Heart left ventricle (tissue), 16 donors: ENCODE measurements at regions of chr4 and their contacts with region 1.

Region 1: DNA sequence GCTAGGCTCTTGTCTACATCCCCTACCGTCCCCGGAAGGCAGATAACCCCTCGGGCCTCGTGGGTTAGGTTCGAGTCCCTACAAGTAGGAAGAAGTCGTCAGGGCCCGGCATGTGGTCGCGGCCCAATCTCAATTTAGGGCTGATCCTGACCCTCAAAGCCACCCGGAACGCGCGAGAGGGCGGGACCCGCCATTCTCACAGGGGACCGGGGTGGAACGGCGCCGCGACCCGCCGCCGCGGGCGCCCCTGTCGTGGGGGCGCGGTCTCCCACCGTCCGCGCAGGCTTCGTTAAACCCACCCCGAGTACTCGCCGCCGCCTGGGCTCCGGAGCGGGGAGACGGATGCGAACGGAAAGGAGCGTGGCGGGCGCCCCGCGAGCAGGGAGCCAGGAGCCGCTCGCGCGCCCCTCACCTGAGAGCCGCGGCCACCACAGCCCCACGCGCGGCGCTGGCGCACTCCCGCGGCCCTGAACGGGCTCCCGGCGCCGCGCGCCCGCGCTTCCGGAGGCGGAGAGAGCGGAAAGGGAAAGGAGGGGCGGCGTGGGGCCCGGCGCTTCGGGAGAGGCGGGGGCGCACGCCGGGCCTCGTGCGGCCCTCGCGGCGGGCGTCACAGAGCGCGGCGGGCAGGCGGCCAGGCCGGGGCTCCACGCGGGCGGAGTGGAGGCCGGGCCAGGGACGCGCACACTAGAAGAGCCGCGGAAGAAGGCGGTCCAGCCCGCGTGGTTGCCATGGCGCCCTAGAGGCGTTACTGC is at the start of gene CFAP97:
- DNase-seq: peak; percentile 93 to 96 (median 94)
- ATAC-seq: peak; percentile 91 to 96 (median 94)
- H3K4me3 ChIP-seq: peak within 1 kb of the TSS; percentile 59 to 93 (median 84)
- H3K27ac ChIP-seq: peak within 1 kb of the TSS; percentile 88 to 99 (median 97)
- H3K4me1 ChIP-seq: peaks cover 6 to 36% (median 23%) of the 10 kb centered on the region in 12 donors
- H3K27me3 ChIP-seq: no peaks in the 10 kb centered on the region
- CTCF ChIP-seq: peak in 3 of 12 donors; percentile 7 to 26 (median 21)
- POLR2A ChIP-seq: peak in 1 of 2 donors; percentile 70
- total RNA-seq, gene CFAP97: 9.7 to 22.7 (median 14.5) TPM

Region 2: DNA sequence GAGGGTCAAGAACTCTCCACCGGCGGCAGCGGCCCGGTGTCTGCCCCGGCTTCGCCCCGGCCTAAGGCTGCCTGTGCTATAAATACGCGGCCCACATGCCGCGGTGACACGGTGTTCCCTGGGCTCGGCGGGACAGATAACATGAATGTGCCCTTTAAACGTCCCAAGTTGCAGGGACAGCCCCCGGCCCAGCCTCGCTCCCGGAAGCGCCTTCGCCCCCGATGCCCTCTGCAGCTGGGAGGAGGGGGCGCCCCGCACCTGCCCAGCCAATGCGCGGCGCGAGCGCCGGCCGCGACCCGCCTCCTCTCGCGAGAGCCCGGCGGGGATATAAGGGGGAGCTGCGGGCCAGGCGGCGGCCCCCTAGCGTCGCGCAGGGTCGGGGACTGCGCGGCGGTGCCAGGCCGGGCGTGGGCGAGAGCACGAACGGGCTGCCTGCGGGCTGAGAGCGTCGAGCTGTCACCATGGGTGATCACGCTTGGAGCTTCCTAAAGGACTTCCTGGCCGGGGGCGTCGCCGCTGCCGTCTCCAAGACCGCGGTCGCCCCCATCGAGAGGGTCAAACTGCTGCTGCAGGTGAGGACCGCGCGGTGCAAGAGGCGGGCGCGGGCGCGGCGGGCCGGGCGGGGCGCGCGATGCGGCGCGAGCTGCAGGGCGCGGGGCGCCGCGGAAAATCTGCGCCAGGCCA is 60.6 kb before region 1 on chr4 and contains the start of gene SLC25A4:
- intact Hi-C with region 1: no loop called
- DNase-seq: peak; percentile 89 to 95 (median 94)
- ATAC-seq: peak; percentile 86 to 90 (median 88)
- H3K4me3 ChIP-seq: peak within 1 kb of the TSS; percentile 43 to 89 (median 74)
- H3K27ac ChIP-seq: peak within 1 kb of the TSS; percentile 77 to 97 (median 88)
- H3K4me1 ChIP-seq: peaks cover 0 to 68% (median 25%) of the 10 kb centered on the region in 12 donors
- H3K27me3 ChIP-seq: peaks cover 0 to 15% (median 0%) of the 10 kb centered on the region in 9 donors
- CTCF ChIP-seq: peak; percentile 23 to 69 (median 51)
- POLR2A ChIP-seq: peak; percentile 83 to 99
- total RNA-seq, gene SLC25A4: 878 to 2,214 (median 1,547) TPM

Region 3: DNA sequence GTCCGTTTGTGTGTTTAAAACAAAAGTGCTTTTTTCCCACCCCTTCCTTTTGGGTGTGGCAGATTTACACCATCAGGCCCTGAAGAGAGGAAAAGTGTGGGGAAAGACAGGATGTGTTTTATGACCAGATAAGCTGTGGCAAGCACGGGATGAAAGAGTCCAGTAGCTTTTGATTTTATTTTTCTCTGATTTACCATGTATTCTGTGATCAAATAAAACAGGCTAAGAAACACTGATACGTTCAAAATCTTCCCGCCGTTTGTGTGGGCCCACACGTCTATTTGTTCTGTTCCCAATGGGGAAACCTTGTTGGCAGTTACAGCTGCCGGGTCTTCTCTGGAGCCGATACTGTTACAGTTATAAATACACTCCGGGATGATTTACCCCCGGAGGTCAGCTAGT is 181.3 kb after region 1 on chr4:
- intact Hi-C with region 1: loop called in 3 of 10 experiments (anchors 1 to 10 kb)
- DNase-seq: peak in 2 of 5 donors; percentile 18 to 29
- ATAC-seq: peak; percentile 18 to 89 (median 58)
- H3K4me3 ChIP-seq: peak overlapping the region in 6 of 12 donors; percentile 7 to 32 (median 20)
- H3K27ac ChIP-seq: peak overlapping the region in 10 of 12 donors; percentile 2 to 75 (median 50)
- H3K4me1 ChIP-seq: peaks cover 0 to 14% (median 0%) of the 10 kb centered on the region in 12 donors
- H3K27me3 ChIP-seq: no peaks in the 10 kb centered on the region
- CTCF ChIP-seq: no peak
- POLR2A ChIP-seq: no peak

Region 4: GRCh38 chr4:185395956-185396723 is 192.5 kb after region 1 on chr4:
- intact Hi-C with region 1: loop called in 5 of 10 experiments (anchors 1 to 10 kb)
- DNase-seq: peak; percentile 96 to 99 (median 97)
- ATAC-seq: peak; percentile 92 to 98 (median 96)
- H3K4me3 ChIP-seq: peak overlapping the region; percentile 64 to 88 (median 77)
- H3K27ac ChIP-seq: peak overlapping the region; percentile 98 to 100 (median 100)
- H3K4me1 ChIP-seq: peaks cover 0 to 46% (median 26%) of the 10 kb centered on the region in 12 donors
- H3K27me3 ChIP-seq: no peaks in the 10 kb centered on the region
- CTCF ChIP-seq: peak in 2 of 12 donors; percentile 10 to 17
- POLR2A ChIP-seq: peak in 1 of 2 donors; percentile 67

Region 5: GRCh38 chr4:186037692-186038658 is 834.3 kb after region 1 on chr4:
- intact Hi-C with region 1: loop called in 1 of 10 experiments (anchors 10 kb)
- DNase-seq: peak in 2 of 5 donors; percentile 49 to 68
- ATAC-seq: peak; percentile 49 to 87 (median 79)
- H3K4me3 ChIP-seq: no peak overlapping the region
- H3K27ac ChIP-seq: peak overlapping the region in 1 of 12 donors; percentile 49
- H3K4me1 ChIP-seq: peaks cover 0 to 11% (median 6%) of the 10 kb centered on the region in 12 donors
- H3K27me3 ChIP-seq: no peaks in the 10 kb centered on the region
- CTCF ChIP-seq: peak; percentile 73 to 92 (median 83)
- POLR2A ChIP-seq: no peak